ENCODE measurements at regions of chr6 and their contacts with region 1.

Region 1: GRCh38 chr6:10694302-10695085 is at the starts of genes C6orf52 and PAK1IP1:
- DNase-seq: peak; percentile 92
- H3K4me3 Mint-ChIP-seq: peak within 1 kb of the TSS; percentile 99
- H3K27ac Mint-ChIP-seq: peak within 1 kb of the TSS; percentile 100
- H3K4me1 Mint-ChIP-seq: peaks cover 21% of the 10 kb centered on the region
- H3K27me3 Mint-ChIP-seq: no peaks in the 10 kb centered on the region
- total RNA-seq, gene C6orf52: 1.7 and 2.4 TPM in 2 replicates
- total RNA-seq, gene PAK1IP1: 27.9 and 28.8 TPM in 2 replicates

Region 2: DNA sequence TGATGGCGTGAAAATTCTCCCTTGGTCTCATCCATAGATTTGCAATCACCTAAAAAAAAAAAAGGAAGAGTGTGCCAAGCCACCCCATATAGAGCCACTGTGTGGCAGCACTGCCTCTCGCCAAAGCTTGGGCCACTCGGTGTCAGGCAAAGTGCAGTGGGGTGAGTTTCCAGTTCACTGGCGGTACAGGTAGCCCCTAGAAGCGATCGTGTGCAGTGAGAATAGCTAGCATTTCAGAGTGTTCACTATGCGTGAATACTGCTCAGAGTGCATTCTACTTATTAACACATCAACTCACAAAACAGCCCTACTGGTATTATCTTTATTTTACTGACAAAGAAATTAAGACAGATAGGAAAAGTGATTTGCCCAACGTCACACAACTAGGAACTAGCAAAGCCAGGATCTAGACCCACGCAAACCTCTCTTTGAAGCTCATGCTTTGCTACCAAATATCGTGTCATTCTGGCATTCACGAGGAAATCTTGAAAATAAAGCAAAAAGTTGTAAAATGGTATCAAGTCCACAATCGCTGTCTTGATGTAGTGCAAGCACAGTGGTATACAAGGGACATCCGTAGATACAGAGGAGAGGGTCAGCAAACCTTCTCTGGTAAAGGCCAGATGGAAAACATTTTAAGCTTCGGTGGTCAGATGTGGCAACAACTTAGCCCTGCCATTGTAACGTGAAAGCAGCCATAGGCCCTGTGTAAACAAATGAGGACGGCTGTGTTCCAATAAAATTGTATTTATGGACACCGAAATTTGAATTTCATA is 183.7 kb before region 1 on chr6:
- intact Hi-C with region 1: loop called (anchors 1 kb)
- DNase-seq: peak; percentile 30
- H3K4me3 Mint-ChIP-seq: no peak overlapping the region
- H3K27ac Mint-ChIP-seq: no peak overlapping the region
- H3K4me1 Mint-ChIP-seq: no peaks in the 10 kb centered on the region
- H3K27me3 Mint-ChIP-seq: peaks cover 8% of the 10 kb centered on the region

Region 3: GRCh38 chr6:10528170-10528981 is 166.1 kb before region 1 on chr6:
- intact Hi-C with region 1: loop called (anchors 1 kb)
- DNase-seq: peak; percentile 22
- H3K4me3 Mint-ChIP-seq: peak overlapping the region; percentile 78
- H3K27ac Mint-ChIP-seq: peak overlapping the region; percentile 88
- H3K4me1 Mint-ChIP-seq: peaks cover 45% of the 10 kb centered on the region
- H3K27me3 Mint-ChIP-seq: no peaks in the 10 kb centered on the region

Region 4: DNA sequence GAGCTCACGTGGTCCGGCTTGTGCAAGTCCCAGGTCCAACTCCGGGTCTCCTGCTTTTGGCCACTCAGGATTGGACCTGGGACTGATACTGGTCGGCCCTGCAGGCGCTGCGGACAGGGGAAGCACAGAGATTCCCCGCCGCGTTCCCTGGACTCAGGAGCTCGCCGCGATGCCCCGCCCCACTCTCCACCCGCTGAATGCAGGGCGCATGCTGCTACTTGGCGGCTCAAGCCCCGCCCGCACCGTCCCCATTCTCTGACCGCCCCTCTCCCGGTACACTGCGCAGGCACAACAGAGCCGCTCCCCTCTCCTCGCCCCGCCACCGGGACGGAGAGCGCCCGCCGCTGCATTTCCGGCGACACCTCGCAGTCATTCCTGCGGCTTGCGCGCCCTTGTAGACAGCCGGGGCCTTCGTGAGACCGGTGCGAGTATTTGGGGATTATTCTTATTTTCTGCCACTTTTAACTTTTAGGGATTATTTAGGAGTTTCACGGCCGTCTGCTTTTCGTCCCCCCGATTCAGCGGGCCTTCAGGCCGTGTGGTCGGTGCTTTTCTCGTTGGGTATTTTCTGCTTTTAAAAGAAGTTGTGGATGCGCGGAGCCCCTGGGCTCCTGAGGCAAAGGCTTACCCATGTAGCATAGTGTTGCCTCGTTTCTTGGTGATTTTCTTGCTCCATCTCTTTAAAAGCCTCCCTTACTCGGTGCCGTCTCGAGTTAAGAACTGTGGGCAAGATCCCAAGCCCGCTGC is 28.5 kb after region 1 on chr6 and contains the start of gene TMEM14C:
- intact Hi-C with region 1: loop called (anchors 1 kb)
- DNase-seq: peak; percentile 88
- H3K4me3 Mint-ChIP-seq: peak within 1 kb of the TSS; percentile 87
- H3K27ac Mint-ChIP-seq: peak within 1 kb of the TSS; percentile 92
- H3K4me1 Mint-ChIP-seq: peaks cover 38% of the 10 kb centered on the region
- H3K27me3 Mint-ChIP-seq: no peaks in the 10 kb centered on the region
- total RNA-seq, gene TMEM14C: 61.3 and 65.4 TPM in 2 replicates

Region 5: GRCh38 chr6:10747251-10747972 is 52.9 kb after region 1 on chr6 and contains the start of gene TMEM14B:
- intact Hi-C with region 1: loop called (anchors 1 kb)
- DNase-seq: peak; percentile 99
- H3K4me3 Mint-ChIP-seq: peak within 1 kb of the TSS; percentile 95
- H3K27ac Mint-ChIP-seq: peak within 1 kb of the TSS; percentile 94
- H3K4me1 Mint-ChIP-seq: peaks cover 37% of the 10 kb centered on the region
- H3K27me3 Mint-ChIP-seq: no peaks in the 10 kb centered on the region
- total RNA-seq, gene TMEM14B: 85.3 and 94.0 TPM in 2 replicates

Region 6: GRCh38 chr6:10800829-10801535 is 106.5 kb after region 1 on chr6:
- intact Hi-C with region 1: loop called (anchors 2 kb)
- DNase-seq: peak; percentile 47
- H3K4me3 Mint-ChIP-seq: no peak overlapping the region
- H3K27ac Mint-ChIP-seq: no peak overlapping the region
- H3K4me1 Mint-ChIP-seq: no peaks in the 10 kb centered on the region
- H3K27me3 Mint-ChIP-seq: no peaks in the 10 kb centered on the region

Region 7: DNA sequence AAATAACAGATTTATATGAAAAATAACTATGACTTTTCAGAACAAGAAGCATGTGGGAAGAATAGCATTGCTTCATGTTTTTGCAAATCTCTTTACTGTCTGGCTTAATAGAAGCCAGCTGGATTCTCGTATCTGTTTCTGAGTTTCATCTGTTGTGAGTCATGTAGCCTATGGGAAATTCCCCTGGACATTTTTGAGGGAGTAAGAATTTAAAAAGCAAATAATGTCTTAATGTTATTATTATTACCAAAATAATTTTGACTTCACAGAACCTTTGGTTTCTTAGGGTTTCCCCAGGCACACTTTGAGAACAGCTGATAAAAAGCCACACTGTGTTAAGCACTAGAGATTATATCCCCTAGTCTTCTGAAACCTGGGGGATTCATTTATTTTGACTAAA is 268.2 kb after region 1 on chr6:
- intact Hi-C with region 1: no loop called
- DNase-seq: no peak
- H3K4me3 Mint-ChIP-seq: no peak overlapping the region
- H3K27ac Mint-ChIP-seq: no peak overlapping the region
- H3K4me1 Mint-ChIP-seq: no peaks in the 10 kb centered on the region
- H3K27me3 Mint-ChIP-seq: peaks cover 7% of the 10 kb centered on the region

Region 8: GRCh38 chr6:11007715-11008608 is 313.5 kb after region 1 on chr6:
- intact Hi-C with region 1: no loop called
- DNase-seq: no peak
- H3K4me3 Mint-ChIP-seq: no peak overlapping the region
- H3K27ac Mint-ChIP-seq: no peak overlapping the region
- H3K4me1 Mint-ChIP-seq: no peaks in the 10 kb centered on the region
- H3K27me3 Mint-ChIP-seq: peaks cover 8% of the 10 kb centered on the region

Region 9: GRCh38 chr6:11093589-11094410 is 399.3 kb after region 1 on chr6 and contains the start of gene SMIM13:
- intact Hi-C with region 1: loop called (anchors 1 kb)
- DNase-seq: peak; percentile 92
- H3K4me3 Mint-ChIP-seq: peak within 1 kb of the TSS; percentile 96
- H3K27ac Mint-ChIP-seq: peak within 1 kb of the TSS; percentile 98
- H3K4me1 Mint-ChIP-seq: peaks cover 22% of the 10 kb centered on the region
- H3K27me3 Mint-ChIP-seq: peaks cover 2% of the 10 kb centered on the region
- total RNA-seq, gene SMIM13: 12.2 and 12.3 TPM in 2 replicates

Measured in activated T-helper 2 cell treated with anti-CD3 and anti-CD28 coated beads, Interferon-gamma antibody, Interleukin-2, Interleukin-4, amounts not matched to agents 10 μg/mL and 5 μg/mL and 100 μg/mL, durations not matched to agents 14 hours and 24 hours and 36 hours (primary cell).